ENCODE measurements at regions of chr6 and their contacts with region 1.

Region 1: GRCh38 chr6:2196079-2196679 is 49.2 kb downstream of the GMDS start:
- DNase-seq: peak in 1 of 2 donors; percentile 72
- ATAC-seq: peak; percentile 73 to 82 (median 78)
- H3K4me3 ChIP-seq: no peak overlapping the region
- H3K4me3 Mint-ChIP-seq: no peak overlapping the region
- H3K27ac ChIP-seq: no peak overlapping the region
- H3K27ac Mint-ChIP-seq: no peak overlapping the region
- H3K4me1 ChIP-seq: no peaks in the 10 kb centered on the region
- H3K4me1 Mint-ChIP-seq: no peaks in the 10 kb centered on the region
- H3K27me3 ChIP-seq: no peaks in the 10 kb centered on the region
- H3K27me3 Mint-ChIP-seq: no peaks in the 10 kb centered on the region
- CTCF ChIP-seq: peak; percentile 87

Region 2: GRCh38 chr6:2103644-2104523 is 92.3 kb before region 1 on chr6:
- intact Hi-C with region 1: loop called (anchors 1 kb)
- DNase-seq: peak in 1 of 2 donors; percentile 56
- ATAC-seq: peak in 1 of 3 donors; percentile 71
- H3K4me3 ChIP-seq: no peak overlapping the region
- H3K4me3 Mint-ChIP-seq: no peak overlapping the region
- H3K27ac ChIP-seq: no peak overlapping the region
- H3K27ac Mint-ChIP-seq: no peak overlapping the region
- H3K4me1 ChIP-seq: no peaks in the 10 kb centered on the region
- H3K4me1 Mint-ChIP-seq: peaks cover 5% of the 10 kb centered on the region in 2 donors
- H3K27me3 ChIP-seq: no peaks in the 10 kb centered on the region
- H3K27me3 Mint-ChIP-seq: peaks cover 0 to 5% of the 10 kb centered on the region in 2 donors
- CTCF ChIP-seq: peak; percentile 44

Region 3: DNA sequence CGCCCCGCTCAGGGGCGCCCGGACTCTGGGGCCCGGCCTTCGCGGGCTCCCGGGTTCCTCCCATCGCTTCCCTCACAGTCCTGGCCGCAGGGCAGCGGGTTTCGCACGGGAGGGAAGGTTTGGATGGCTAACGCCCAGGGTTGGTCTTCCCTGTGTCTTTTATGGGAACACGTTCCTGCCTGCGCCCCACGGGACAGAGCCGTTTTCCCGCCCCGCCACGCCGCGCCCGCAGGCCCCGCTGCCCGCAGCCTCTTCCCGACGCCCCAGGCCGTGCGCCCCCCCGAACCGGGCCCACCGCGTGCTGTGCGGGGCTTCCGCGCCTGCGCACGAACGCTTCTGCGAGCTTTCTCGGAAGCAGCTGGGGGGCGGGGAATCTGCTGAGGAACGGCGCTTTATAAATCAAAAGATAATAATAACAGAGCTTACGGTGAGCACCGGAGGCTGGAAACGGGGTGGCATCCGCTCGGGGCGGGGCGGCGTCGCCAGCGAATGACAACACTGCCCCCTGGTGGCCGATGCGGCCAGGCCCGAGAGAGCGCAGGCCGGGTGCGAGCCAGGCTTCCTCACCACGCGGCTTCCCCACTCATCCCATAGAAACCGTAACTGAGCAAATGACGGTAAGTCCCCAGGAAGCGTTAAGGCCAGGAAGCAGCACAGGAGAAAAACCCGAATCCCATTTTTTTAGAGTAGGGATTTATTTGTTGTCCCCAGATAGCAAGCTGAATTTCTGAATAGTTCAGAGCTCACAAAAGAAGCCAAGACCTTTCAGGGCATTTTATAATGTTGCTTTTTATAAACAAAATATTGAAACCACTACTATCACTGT is 438.2 kb after region 1 on chr6:
- intact Hi-C with region 1: loop called (anchors 5 kb)
- DNase-seq: peak; percentile 74 to 89
- ATAC-seq: peak; percentile 91 to 99 (median 96)
- H3K4me3 ChIP-seq: peak overlapping the region; percentile 27
- H3K4me3 Mint-ChIP-seq: peak overlapping the region; percentile 81
- H3K27ac ChIP-seq: no peak overlapping the region
- H3K27ac Mint-ChIP-seq: no peak overlapping the region
- H3K4me1 ChIP-seq: peaks cover 8% of the 10 kb centered on the region
- H3K4me1 Mint-ChIP-seq: peaks cover 0 to 5% of the 10 kb centered on the region in 2 donors
- H3K27me3 ChIP-seq: peaks cover 2% of the 10 kb centered on the region
- H3K27me3 Mint-ChIP-seq: peaks cover 11 to 20% of the 10 kb centered on the region in 2 donors
- CTCF ChIP-seq: peak; percentile 98